PC-3 (cell line): ENCODE measurements at regions of chr7 and their contacts with region 1.

Region 1: GRCh38 chr7:148914208-148914777 is 30.2 kb upstream of the EZH2 start:
- DNase-seq: peak; percentile 88
- ATAC-seq: peak; percentile 81
- H3K4me3 ChIP-seq: no peak overlapping the region; the same call in 1 of the 2 replicates
- H3K27ac ChIP-seq: peak overlapping the region; percentile 25
- H3K4me1 ChIP-seq: peaks cover 22% of the 10 kb centered on the region
- H3K27me3 ChIP-seq: no peaks in the 10 kb centered on the region
- CTCF ChIP-seq: no peak

Region 2: DNA sequence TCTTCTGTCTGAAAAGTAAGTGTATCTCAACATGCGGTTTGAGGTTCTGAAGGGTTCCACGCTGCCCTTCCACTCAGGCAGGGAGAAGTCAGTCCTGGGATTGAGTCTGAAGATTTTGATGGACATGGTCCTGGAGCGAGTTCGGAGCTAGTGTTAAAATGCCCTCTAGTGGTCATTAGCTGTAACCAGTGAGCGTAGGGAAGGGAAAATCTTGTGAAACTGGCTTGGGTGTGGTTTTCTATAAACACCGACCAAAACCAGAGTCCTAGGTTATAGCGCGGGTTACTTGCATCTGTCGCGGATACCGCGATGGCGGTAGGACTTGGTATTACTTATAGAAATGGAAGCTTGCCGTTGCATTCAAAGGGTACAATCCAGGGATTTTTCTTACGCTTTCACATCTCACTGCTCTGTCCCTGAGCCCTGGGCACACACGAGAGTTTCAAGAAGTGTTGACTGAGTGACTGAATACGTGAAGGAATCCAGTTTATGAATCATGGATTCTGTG is 671.9 kb before region 1 on chr7:
- CTCF ChIA-PET with region 1: interaction called, 11 read pairs
- POLR2A ChIA-PET with region 1: no interaction called
- intact Hi-C with region 1: no loop called
- DNase-seq: peak; percentile 85
- ATAC-seq: peak; percentile 93
- H3K4me3 ChIP-seq: peak overlapping the region; percentile 64
- H3K27ac ChIP-seq: no peak overlapping the region
- H3K4me1 ChIP-seq: peaks cover 6% of the 10 kb centered on the region; the same call in 1 of the 2 replicates
- H3K27me3 ChIP-seq: peaks cover 13% of the 10 kb centered on the region; the same call in 1 of the 2 replicates
- CTCF ChIP-seq: peak; percentile 85

Region 3: GRCh38 chr7:148940702-148941597 is 26.7 kb after region 1 on chr7:
- CTCF ChIA-PET with region 1: no interaction called
- POLR2A ChIA-PET with region 1: interaction called, 22 read pairs
- intact Hi-C with region 1: loop called (anchors 1 kb)
- DNase-seq: peak; percentile 71
- ATAC-seq: peak; percentile 76
- H3K4me3 ChIP-seq: peak overlapping the region; percentile 76
- H3K27ac ChIP-seq: peak overlapping the region; percentile 73
- H3K4me1 ChIP-seq: peaks cover 12% of the 10 kb centered on the region
- H3K27me3 ChIP-seq: no peaks in the 10 kb centered on the region
- CTCF ChIP-seq: no peak

Region 4: GRCh38 chr7:149209518-149210269 is 295.4 kb after region 1 on chr7:
- CTCF ChIA-PET with region 1: no interaction called
- POLR2A ChIA-PET with region 1: no interaction called
- intact Hi-C with region 1: no loop called
- DNase-seq: peak; percentile 77
- ATAC-seq: peak; percentile 89
- H3K4me3 ChIP-seq: no peak overlapping the region
- H3K27ac ChIP-seq: no peak overlapping the region
- H3K4me1 ChIP-seq: peaks cover 18% of the 10 kb centered on the region
- H3K27me3 ChIP-seq: no peaks in the 10 kb centered on the region
- CTCF ChIP-seq: peak; percentile 87